GM10248 (cell line): ENCODE measurements at regions of chr1 and their contacts with region 1.

Region 1: DNA sequence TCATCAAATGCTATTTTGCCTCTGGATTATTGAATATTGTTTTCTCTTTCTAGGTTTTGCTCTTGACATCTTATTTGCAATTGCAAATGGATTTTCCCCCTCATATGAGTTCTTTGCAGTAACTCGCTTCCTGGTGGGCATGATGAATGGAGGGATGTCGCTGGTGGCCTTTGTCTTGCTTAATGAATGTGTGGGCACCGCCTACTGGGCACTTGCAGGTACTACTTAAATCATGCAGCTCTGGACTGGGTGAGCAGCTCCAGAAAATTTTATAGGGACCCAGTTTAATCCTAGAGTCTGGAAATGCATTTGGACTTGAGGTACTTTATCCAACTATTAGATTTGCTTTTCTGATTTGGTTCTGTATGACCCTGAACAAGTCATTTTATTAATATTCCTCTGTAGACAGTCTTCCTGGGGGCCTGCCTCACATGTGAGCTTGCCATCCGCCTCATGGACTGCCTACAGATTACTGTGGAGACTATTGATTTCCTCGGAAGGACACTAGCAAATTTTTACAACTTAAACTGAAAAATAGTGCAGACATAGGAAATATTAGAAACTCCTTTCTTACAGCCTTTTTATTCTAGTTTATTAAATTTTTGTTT is 44.5 kb downstream of the SLC22A15 start:
- DNase-seq: peak; percentile 54
- CTCF ChIP-seq: peak; percentile 62

Region 2: DNA sequence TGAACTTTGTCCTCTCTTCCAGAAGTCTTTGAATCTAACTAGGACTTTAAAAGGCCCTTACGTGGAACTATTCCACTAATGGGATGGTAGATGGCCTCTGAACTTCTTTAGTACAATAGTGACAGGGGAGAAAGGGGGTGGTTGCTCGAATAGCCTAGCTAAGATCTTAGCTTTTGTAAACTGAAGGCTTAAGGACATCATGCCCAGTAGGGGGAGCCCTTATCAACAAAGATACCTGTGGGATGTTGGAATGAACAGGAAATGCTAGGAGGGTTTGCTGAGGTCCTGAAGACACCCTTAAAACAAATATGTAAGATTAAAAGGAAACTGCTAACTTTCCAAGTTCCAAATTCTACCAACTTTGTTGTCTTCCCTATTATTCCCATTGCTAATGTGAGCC is 213.0 kb before region 1 on chr1:
- CTCF ChIA-PET with region 1: interaction called, 25 read pairs
- POLR2A ChIA-PET with region 1: no interaction called
- DNase-seq: peak; percentile 51
- CTCF ChIP-seq: peak; percentile 72

Region 3: GRCh38 chr1:116006486-116006964 is 14.2 kb before region 1 on chr1:
- CTCF ChIA-PET with region 1: interaction called, 16 read pairs
- POLR2A ChIA-PET with region 1: no interaction called
- DNase-seq: peak; percentile 17
- CTCF ChIP-seq: no peak

Region 4: DNA sequence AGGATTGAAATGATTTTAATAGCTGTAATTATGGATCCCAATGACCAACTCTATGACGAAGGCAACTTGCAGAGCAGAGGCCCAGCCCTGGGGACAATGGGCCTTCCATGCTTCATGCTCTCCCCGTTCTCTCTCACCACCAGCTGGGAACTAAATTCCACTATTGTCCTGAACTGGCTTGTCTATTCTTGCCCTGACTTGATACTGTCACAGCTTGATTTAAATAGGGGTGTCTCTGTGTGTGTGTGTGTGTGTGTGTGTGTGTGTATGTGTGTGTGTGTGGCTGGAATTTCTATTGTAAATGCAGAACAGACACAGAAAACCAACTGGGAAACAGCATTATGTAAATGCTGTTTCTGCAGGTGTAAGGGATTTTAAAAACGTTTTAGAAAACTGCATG is 12.6 kb after region 1 on chr1:
- CTCF ChIA-PET with region 1: interaction called, 63 read pairs
- POLR2A ChIA-PET with region 1: no interaction called
- DNase-seq: no peak
- CTCF ChIP-seq: no peak

Region 5: GRCh38 chr1:116110567-116111523 is 90.1 kb after region 1 on chr1 and contains the start of gene MAB21L3:
- CTCF ChIA-PET with region 1: no interaction called
- POLR2A ChIA-PET with region 1: no interaction called
- DNase-seq: peak; percentile 61
- CTCF ChIP-seq: no peak